ENCODE measurements at regions of chr2 and their contacts with region 1.

Region 1: DNA sequence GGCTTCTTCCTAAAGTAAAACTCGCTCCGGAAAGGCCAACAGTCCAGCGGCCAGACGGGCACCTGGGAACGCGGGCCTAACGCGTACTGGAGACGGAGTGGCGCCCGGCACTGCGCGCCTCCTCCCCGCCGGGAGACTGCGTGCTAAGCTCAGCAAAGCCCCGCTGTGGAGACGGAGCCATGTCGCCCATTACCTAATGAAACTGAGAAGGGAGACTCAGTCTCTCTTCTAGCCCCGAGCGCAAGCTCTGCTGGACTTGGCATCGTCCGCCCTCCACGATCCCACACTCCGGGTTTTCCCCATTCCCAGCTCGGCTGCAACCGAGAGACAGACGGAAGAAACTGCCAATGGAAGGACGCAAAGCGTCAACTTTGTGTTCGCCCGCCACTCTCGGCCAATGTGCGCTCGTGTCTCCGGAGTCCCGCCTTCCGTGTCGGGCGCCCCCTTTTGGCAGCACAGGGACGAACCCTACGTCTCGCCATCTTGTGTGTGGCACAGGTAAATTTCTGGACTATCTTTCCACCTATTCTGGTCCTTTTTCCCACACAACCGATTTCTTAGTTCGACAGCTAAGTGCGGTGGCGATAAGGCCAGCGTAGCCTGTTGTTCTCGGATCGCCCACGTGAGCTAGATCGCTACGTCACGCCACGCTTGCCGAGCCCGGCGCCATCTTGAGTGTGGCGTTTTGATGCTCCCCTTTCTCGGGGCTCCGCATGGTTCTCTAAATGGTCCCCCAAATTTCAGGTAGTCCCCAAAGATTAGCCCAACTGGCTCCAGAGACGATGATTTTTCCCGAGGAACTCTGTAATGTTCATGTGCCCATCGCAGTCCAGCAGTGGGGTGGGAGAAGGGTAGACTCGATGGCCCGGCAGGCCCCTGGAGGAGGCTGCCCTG is 1.3 kb upstream of the PTMA start:
- DNase-seq: peak; percentile 98
- ATAC-seq: peak; percentile 33
- H3K4me3 Mint-ChIP-seq: peak overlapping the region; percentile 94
- H3K27ac Mint-ChIP-seq: peak overlapping the region; percentile 100
- H3K4me1 Mint-ChIP-seq: peaks cover 20% of the 10 kb centered on the region
- H3K27me3 Mint-ChIP-seq: no peaks in the 10 kb centered on the region

Region 2: DNA sequence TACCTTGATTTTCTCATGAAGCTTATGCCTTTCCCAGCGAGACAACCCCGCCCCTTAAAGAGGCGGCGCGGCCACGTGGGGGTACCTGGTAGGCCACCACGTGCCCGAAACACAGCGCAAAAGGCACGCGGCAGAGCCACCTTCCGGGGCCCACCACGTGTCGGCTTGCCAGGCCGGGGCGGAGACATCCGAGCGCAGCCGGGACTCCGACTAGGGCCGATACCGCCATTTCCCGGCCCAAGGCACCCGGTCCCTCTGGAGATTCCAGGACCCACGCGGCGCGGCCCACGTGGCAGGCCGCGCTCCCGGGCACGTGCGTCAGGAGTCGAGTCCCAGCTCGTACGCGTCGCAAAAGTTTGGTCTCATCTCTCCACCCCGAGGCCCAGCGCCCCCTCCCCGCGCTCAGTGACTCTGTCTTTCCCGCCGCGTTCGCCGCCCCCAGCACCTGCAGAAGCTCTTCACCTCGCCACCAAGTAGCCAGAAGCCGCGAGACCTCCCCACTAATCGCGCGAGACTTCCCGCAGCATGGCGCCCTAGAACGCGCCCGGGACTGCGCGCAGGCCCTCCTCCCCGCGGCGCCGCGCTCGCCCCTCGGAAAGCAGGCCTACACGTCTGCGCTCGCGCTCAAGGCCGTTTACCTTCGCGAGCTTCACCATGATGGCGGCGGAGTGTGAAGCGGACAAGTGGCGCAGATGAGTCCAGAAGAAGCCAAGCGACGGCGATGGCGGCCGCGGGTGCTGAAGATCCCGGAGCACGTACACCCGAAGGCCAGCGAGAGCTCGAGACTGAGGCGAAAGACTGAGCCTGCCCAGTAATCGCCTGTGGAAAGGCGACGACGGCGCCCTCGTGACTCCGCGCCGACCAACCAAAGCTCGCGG is 243.0 kb before region 1 on chr2 and contains the start of gene NCL:
- POLR2A ChIA-PET with region 1: interaction called, 12 read pairs
- DNase-seq: peak; percentile 88
- ATAC-seq: peak; percentile 93
- H3K4me3 Mint-ChIP-seq: peak within 1 kb of the TSS; percentile 99
- H3K27ac Mint-ChIP-seq: peak within 1 kb of the TSS; percentile 100
- H3K4me1 Mint-ChIP-seq: peaks cover 37% of the 10 kb centered on the region
- H3K27me3 Mint-ChIP-seq: no peaks in the 10 kb centered on the region
- total RNA-seq, gene NCL: 461 to 462 TPM

Region 3: GRCh38 chr2:231612179-231613053 is 94.6 kb before region 1 on chr2:
- POLR2A ChIA-PET with region 1: interaction called, 92 read pairs
- DNase-seq: peak; percentile 93
- ATAC-seq: peak; percentile 52
- H3K4me3 Mint-ChIP-seq: peak overlapping the region; percentile 91
- H3K27ac Mint-ChIP-seq: peak overlapping the region; percentile 99
- H3K4me1 Mint-ChIP-seq: peaks cover 29% of the 10 kb centered on the region
- H3K27me3 Mint-ChIP-seq: no peaks in the 10 kb centered on the region

Region 4: GRCh38 chr2:231662028-231662810 is 44.8 kb before region 1 on chr2:
- POLR2A ChIA-PET with region 1: interaction called, 47 read pairs
- DNase-seq: peak; percentile 100
- ATAC-seq: peak; percentile 94
- H3K4me3 Mint-ChIP-seq: peak overlapping the region; percentile 78
- H3K27ac Mint-ChIP-seq: peak overlapping the region; percentile 92
- H3K4me1 Mint-ChIP-seq: peaks cover 12% of the 10 kb centered on the region
- H3K27me3 Mint-ChIP-seq: no peaks in the 10 kb centered on the region

Region 5: GRCh38 chr2:231674587-231675338 is 32.2 kb before region 1 on chr2:
- POLR2A ChIA-PET with region 1: interaction called, 42 read pairs
- DNase-seq: peak; percentile 76
- ATAC-seq: peak; percentile 71
- H3K4me3 Mint-ChIP-seq: no peak overlapping the region
- H3K27ac Mint-ChIP-seq: peak overlapping the region; percentile 58
- H3K4me1 Mint-ChIP-seq: peaks cover 13% of the 10 kb centered on the region
- H3K27me3 Mint-ChIP-seq: peaks cover 4% of the 10 kb centered on the region

Region 6: DNA sequence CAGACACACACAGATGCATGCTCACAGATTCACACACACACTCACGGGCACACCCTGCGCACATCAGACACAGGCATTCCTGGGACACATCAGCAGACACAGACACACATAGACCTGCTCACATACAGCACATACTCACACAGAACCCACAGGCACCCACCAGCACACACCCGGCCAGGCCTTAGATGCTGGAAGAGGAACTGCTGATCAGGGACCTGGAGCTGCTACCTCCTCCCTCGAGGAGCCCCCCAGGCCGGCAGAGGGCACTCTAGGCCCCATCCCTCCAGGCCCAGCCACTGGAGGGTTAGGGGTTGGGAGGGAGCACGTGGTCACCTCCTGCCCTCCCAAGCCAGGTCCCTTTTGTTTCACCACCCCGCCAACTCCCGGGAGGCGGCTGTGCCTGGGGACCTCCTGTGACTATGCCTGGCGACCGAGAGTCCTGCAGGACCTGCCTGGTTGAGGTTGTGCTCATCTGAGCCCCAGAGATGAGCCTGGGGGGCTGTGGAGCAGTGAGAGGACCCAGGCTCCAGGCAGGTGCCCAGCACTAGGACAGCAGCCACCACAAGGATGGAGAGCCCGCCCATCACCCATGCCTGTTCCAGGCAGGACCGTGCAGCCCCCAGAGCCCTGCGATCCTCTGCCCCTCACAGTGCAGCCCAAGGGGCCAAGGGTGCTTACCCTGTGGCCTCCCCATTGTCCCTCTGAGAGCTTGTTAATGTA is 19.7 kb before region 1 on chr2:
- POLR2A ChIA-PET with region 1: interaction called, 13 read pairs
- DNase-seq: peak; percentile 78
- ATAC-seq: peak; percentile 87
- H3K4me3 Mint-ChIP-seq: no peak overlapping the region
- H3K27ac Mint-ChIP-seq: peak overlapping the region; percentile 43
- H3K4me1 Mint-ChIP-seq: peaks cover 9% of the 10 kb centered on the region
- H3K27me3 Mint-ChIP-seq: peaks cover 7% of the 10 kb centered on the region

Measured in activated naive CD8-positive, alpha-beta T cell treated with anti-CD3 and anti-CD28 coated beads, Interleukin-2, amount 10 ng/mL, durations not matched to agents 7 days and 5 days (primary cell).